OCI-LY7 (cell line): ENCODE measurements at regions of chr22 and their contacts with region 1.

Region 1: GRCh38 chr22:46150034-46150654 is at the start of gene PPARA:
- DNase-seq: peak; percentile 83
- H3K4me3 ChIP-seq: peak within 1 kb of the TSS; percentile 72
- H3K27ac ChIP-seq: no peak within 1 kb of the TSS
- H3K4me1 ChIP-seq: peaks cover 16% of the 10 kb centered on the region
- CTCF ChIP-seq: no peak
- total RNA-seq, gene PPARA: 0.90 and 3.3 TPM in 2 replicates

Region 2: GRCh38 chr22:46239261-46240048 is 89.3 kb after region 1 on chr22:
- CTCF ChIA-PET with region 1: no interaction called
- POLR2A ChIA-PET with region 1: interaction called, 6 read pairs
- intact Hi-C with region 1: loop called (anchors 5 kb)
- DNase-seq: peak; percentile 89
- H3K4me3 ChIP-seq: peak overlapping the region; percentile 17
- H3K27ac ChIP-seq: peak overlapping the region; percentile 65
- H3K4me1 ChIP-seq: peaks cover 32% of the 10 kb centered on the region
- CTCF ChIP-seq: no peak